Aorta (tissue), 5 donors: ENCODE measurements at regions of chr2 and their contacts with region 1.

Region 1: GRCh38 chr2:221104361-221104811 is 467.7 kb downstream of the EPHA4 start:
- DNase-seq: peak; percentile 90 to 91
- ATAC-seq: peak; percentile 90
- H3K4me3 ChIP-seq: no peak overlapping the region
- H3K27ac ChIP-seq: peak overlapping the region in 1 of 2 donors; percentile 22
- H3K4me1 ChIP-seq: no peaks in the 10 kb centered on the region
- H3K27me3 ChIP-seq: no peaks in the 10 kb centered on the region

Region 2: GRCh38 chr2:221189431-221190067 is 85.2 kb after region 1 on chr2:
- intact Hi-C with region 1: no loop called
- DNase-seq: no peak
- ATAC-seq: no peak
- H3K4me3 ChIP-seq: no peak overlapping the region
- H3K27ac ChIP-seq: no peak overlapping the region
- H3K4me1 ChIP-seq: no peaks in the 10 kb centered on the region
- H3K27me3 ChIP-seq: no peaks in the 10 kb centered on the region

Region 3: DNA sequence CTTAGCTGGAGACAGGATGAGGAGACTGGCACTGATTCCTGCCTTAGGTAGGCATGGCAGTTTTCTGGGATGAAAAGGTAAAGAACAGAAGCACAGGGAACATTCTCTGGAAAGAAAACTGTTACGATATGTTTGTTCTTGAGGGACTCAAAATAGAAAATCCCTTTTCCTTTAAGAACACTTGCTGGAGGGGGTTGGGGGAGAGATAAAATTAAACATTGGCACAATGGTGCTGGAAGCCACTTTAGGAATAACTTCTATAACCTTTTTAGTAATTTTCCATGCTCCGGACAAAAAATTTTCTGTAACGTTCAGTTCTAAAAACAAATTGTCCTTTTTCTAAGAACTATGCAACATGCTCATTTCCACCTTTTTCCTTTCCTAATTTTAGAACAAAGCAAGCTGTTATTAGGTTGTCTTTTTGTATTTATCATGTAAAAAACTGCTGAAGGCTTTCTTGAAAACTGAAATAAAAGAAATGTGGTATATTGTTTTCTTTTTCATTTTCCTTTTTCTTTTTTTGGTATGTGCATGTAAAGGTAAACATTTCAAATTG is 123.9 kb after region 1 on chr2:
- intact Hi-C with region 1: loop called in 1 of 2 experiments (anchors 10 kb)
- DNase-seq: no peak
- ATAC-seq: peak; percentile 76
- H3K4me3 ChIP-seq: no peak overlapping the region
- H3K27ac ChIP-seq: peak overlapping the region in 1 of 2 donors; percentile 12
- H3K4me1 ChIP-seq: peaks cover 0 to 6% of the 10 kb centered on the region in 2 donors
- H3K27me3 ChIP-seq: no peaks in the 10 kb centered on the region